Mammary epithelial cell (primary cell): ENCODE measurements at regions of chr11 and their contacts with region 1.

Region 1: DNA sequence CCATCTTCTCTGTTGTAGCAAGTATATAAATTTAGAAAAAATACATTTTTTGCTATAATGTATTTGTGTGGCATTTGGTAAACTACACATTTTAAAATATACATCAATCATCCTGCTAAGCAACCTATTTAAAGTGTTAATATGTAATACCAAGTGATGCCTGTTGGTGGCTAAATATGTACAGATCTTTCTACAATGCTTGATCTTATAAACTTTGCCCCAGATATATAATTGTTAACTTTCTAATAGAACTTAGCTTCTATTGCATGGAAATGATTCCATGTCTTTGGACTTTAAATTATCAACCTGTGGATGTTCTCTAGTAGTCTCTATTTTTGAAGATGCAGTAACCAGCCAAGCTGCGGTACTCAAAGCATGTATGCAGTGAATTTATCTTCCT is 1260.4 kb upstream of the RAG2 start:
- DNase-seq: no peak
- H3K4me3 ChIP-seq: no peak overlapping the region
- H3K27ac ChIP-seq: no peak overlapping the region
- H3K4me1 ChIP-seq: no peaks in the 10 kb centered on the region
- H3K27me3 ChIP-seq: no peaks in the 10 kb centered on the region
- CTCF ChIP-seq: peak; percentile 26 to 33

Region 2: GRCh38 chr11:37770145-37770544 is 88.3 kb before region 1 on chr11:
- CTCF ChIA-PET with region 1: no interaction called
- dilution Hi-C with region 1: no loop called
- in situ Hi-C with region 1: loop called in 1 of 2 experiments (anchors 25 kb)
- intact Hi-C with region 1: no loop called
- DNase-seq: peak; percentile 42
- H3K4me3 ChIP-seq: no peak overlapping the region
- H3K27ac ChIP-seq: no peak overlapping the region
- H3K4me1 ChIP-seq: peaks cover 12% of the 10 kb centered on the region
- H3K27me3 ChIP-seq: no peaks in the 10 kb centered on the region
- CTCF ChIP-seq: no peak

Region 3: GRCh38 chr11:37812281-37812880 is 46.0 kb before region 1 on chr11:
- CTCF ChIA-PET with region 1: no interaction called
- dilution Hi-C with region 1: no loop called
- in situ Hi-C with region 1: no loop called
- intact Hi-C with region 1: no loop called
- DNase-seq: no peak
- H3K4me3 ChIP-seq: no peak overlapping the region
- H3K27ac ChIP-seq: no peak overlapping the region
- H3K4me1 ChIP-seq: no peaks in the 10 kb centered on the region
- H3K27me3 ChIP-seq: no peaks in the 10 kb centered on the region
- CTCF ChIP-seq: no peak

Region 4: GRCh38 chr11:37905707-37906417 is 47.5 kb after region 1 on chr11:
- CTCF ChIA-PET with region 1: no interaction called
- dilution Hi-C with region 1: loop called (anchors 5 kb)
- in situ Hi-C with region 1: no loop called
- intact Hi-C with region 1: no loop called
- DNase-seq: peak; percentile 68
- H3K4me3 ChIP-seq: no peak overlapping the region
- H3K27ac ChIP-seq: peak overlapping the region; percentile 4
- H3K4me1 ChIP-seq: peaks cover 13% of the 10 kb centered on the region
- H3K27me3 ChIP-seq: no peaks in the 10 kb centered on the region
- CTCF ChIP-seq: no peak